Posterior vena cava (tissue), 2 donors: ENCODE measurements at regions of chr9 and their contacts with region 1.

Region 1: GRCh38 chr9:107394264-107394663 is 95.3 kb downstream of the KLF4 start:
- DNase-seq: no peak

Region 2: DNA sequence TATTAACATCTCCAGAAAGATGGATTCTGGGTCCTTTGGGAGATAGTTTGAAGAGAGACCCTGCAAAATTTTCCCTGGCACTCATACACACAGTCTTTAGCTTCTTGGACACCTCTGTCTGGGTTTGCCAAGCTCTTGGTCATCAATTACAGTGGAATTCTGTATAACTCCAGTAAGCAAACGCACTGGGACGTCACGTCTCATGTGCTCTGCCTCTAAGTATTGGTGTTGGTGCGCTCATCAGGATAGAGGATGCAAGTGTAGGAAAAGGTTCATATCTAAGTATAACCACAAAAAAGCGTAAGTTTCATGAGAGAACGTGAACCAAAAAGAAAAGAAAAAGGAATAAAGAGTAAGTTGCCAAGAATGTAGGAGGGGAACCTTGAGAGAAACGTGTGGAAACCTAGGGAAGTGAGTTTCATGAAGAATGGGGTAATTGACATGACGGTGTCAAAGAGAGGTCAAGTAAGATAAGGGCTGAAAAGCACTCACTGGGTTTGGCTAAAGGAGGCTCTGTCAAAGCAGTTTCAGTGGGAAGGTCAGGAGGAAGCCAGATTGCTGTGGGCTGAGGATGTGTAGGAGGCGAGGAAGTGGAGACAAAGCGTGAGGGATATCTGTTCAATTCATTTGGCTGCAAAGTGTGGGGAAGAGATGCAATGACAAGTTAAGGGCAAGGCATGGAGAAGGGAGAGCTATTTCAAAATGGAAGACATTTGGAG is 18.5 kb before region 1 on chr9:
- intact Hi-C with region 1: loop called in 1 of 2 experiments (anchors 1 kb)
- DNase-seq: no peak

Region 3: GRCh38 chr9:107717529-107718314 is 323.5 kb after region 1 on chr9:
- intact Hi-C with region 1: no loop called
- DNase-seq: no peak